ENCODE measurements at regions of chr1 and their contacts with region 1.

Region 1: GRCh38 chr1:24391882-24392603 is 21.5 kb downstream of the STPG1 start:
- H3K4me3 ChIP-seq: no peak overlapping the region
- H3K27ac ChIP-seq: no peak overlapping the region
- H3K4me1 ChIP-seq: no peaks in the 10 kb centered on the region
- CTCF ChIP-seq: peak; percentile 72

Region 2: GRCh38 chr1:24193046-24193445 is 199.0 kb before region 1 on chr1:
- CTCF ChIA-PET with region 1: interaction called, 611 read pairs
- POLR2A ChIA-PET with region 1: interaction called, 12 read pairs
- H3K4me3 ChIP-seq: no peak overlapping the region
- H3K27ac ChIP-seq: no peak overlapping the region
- H3K4me1 ChIP-seq: no peaks in the 10 kb centered on the region
- CTCF ChIP-seq: no peak

Region 3: DNA sequence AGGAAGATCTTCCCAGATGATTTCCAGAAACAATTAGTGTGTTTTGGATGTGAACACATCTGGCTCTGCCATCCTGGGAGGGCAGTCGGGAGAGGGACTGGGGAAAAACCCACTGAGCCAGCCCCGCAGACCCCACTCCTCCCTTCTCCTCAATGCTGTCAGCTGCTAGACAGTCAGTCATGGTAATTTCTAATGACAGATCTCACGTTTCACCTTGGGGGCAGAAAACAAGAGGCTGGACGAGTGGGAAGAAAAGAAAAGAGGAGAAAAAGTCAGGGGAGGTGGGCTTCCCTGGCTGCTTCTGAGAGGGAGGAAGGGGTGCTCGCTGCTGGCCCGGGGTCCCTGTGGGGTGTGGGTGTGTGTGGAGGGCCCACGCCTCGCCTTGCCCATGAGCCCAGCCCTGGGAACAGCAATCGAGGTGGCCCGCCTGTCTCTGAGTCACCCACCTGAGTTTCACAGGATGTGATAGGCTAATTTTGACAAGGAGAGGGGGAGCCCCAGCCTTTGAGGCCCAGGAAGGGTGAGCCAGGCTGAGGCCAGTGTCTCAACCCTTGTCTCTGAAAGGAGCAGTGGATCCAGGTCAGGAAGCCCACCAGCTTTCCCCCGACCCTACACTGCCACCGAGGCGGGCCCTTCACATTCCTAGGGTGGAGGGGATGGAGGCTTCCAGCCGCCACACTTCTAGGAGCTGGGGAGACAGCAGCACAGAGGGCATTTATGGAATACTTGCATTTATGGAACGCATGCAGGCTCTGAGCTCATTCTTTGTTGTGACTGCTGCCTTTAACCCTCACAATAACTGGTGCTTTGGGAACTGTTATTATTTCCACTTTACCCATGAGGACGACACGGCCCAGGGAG is 155.9 kb before region 1 on chr1:
- CTCF ChIA-PET with region 1: interaction called, 11 read pairs
- POLR2A ChIA-PET with region 1: no interaction called
- H3K4me3 ChIP-seq: no peak overlapping the region
- H3K27ac ChIP-seq: no peak overlapping the region
- H3K4me1 ChIP-seq: no peaks in the 10 kb centered on the region
- CTCF ChIP-seq: no peak

Region 4: GRCh38 chr1:24321697-24322469 is 70.2 kb before region 1 on chr1:
- CTCF ChIA-PET with region 1: interaction called, 54 read pairs
- POLR2A ChIA-PET with region 1: interaction called, 3 read pairs
- H3K4me3 ChIP-seq: peak overlapping the region; percentile 40
- H3K27ac ChIP-seq: peak overlapping the region; percentile 93
- H3K4me1 ChIP-seq: peaks cover 21% of the 10 kb centered on the region
- CTCF ChIP-seq: peak; percentile 66

Region 5: DNA sequence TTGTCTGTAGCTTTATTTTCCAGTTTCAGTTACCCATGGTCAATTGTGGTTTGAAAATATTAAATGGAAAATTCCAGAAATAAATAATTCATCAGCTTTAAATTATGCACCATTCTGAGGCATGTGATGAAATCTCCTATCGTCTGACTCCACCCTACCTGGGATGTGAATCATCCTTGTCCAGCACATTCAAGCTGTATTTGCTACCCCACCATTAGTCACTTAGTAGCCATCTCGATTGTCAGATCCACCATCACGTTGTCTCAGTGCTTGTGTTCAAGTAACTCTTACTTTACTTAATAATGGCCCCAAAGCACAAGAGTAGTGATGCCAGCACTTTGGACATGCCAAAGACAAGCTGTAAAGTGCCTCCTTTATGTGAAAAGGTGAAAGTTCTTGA is 17.5 kb after region 1 on chr1:
- CTCF ChIA-PET with region 1: interaction called, 24 read pairs
- POLR2A ChIA-PET with region 1: no interaction called
- H3K4me3 ChIP-seq: no peak overlapping the region
- H3K27ac ChIP-seq: no peak overlapping the region
- H3K4me1 ChIP-seq: no peaks in the 10 kb centered on the region
- CTCF ChIP-seq: no peak

Region 6: GRCh38 chr1:24635195-24635843 is 243.3 kb after region 1 on chr1:
- CTCF ChIA-PET with region 1: interaction called, 11 read pairs
- POLR2A ChIA-PET with region 1: no interaction called
- H3K4me3 ChIP-seq: no peak overlapping the region
- H3K27ac ChIP-seq: no peak overlapping the region
- H3K4me1 ChIP-seq: no peaks in the 10 kb centered on the region
- CTCF ChIP-seq: peak; percentile 50; the same call in 1 of the 2 replicates

Measured in HEK293 (cell line).